H1 (cell line): ENCODE measurements at regions of chr3 and their contacts with region 1.

Region 1: DNA sequence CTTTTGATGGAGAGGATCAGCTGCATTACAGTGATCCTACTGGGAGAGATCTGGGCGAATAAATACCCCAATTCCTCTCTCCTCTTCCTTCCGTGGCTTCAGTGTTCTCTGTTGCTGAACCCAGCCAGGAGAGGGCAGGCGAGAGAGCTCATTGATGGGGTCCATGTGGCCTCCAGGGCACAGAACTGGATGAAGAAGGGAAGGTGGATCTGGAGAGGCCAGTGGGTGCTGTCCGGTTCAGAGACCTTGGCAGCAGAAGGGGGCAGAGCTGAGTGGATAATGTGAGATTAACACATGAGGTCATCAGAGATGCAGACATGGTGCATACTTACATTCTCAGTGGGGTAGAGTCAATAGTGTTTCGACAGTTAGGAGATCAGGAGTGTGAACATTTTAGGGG is 193.6 kb downstream of the CLSTN2 start:
- DNase-seq: peak; percentile 25 to 78
- H3K4me3 ChIP-seq: no peak overlapping the region
- H3K27ac ChIP-seq: no peak overlapping the region
- H3K4me1 ChIP-seq: no peaks in the 10 kb centered on the region; a peak in 1 of 7 replicates
- H3K27me3 ChIP-seq: no peaks in the 10 kb centered on the region
- CTCF ChIP-seq: peak; percentile 74 to 86 (median 82)
- EP300 ChIP-seq: no peak
- POLR2A ChIP-seq: no peak
- RAD21 ChIP-seq: peak; percentile 72 to 86

Region 2: DNA sequence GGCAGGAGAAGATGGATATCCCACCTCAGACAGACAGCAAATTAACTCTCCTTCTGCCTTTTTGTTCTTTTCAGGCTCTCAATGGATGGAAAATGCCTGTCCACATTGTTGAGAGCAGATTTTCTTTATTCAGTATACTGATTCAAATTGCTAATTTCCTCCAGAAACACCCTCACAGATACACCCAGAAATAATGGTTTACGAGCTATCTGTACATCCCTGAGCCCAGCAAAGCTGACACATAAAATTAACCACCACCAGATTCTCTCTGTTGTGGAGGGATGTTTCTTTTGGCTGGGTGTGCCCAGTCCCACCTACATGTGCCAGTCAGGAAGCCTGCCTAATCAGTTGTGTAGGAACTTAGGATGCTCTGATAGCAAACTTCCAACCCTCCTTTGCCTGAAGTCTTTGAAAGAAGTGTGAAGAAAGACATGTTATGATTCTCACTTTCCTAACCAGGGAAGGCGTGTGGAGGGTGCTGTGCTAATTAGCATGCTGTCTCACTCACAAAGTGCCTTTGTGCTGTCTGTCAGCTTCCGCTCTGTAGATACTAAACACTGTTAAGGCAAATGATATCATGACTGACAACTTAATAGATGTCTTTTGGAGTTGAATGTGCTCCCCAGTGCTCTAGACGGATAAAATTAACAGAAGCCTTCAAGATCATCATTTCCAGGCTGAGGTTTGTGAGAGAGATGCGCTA is 14.9 kb after region 1 on chr3:
- CTCF ChIA-PET with region 1: interaction called, 29 read pairs
- POLR2A ChIA-PET with region 1: interaction called, 3 read pairs
- DNase-seq: no peak
- H3K4me3 ChIP-seq: no peak overlapping the region
- H3K27ac ChIP-seq: no peak overlapping the region
- H3K4me1 ChIP-seq: no peaks in the 10 kb centered on the region
- H3K27me3 ChIP-seq: no peaks in the 10 kb centered on the region
- CTCF ChIP-seq: no peak
- EP300 ChIP-seq: no peak
- POLR2A ChIP-seq: no peak
- RAD21 ChIP-seq: no peak

Region 3: GRCh38 chr3:140206196-140207048 is 77.8 kb after region 1 on chr3:
- CTCF ChIA-PET with region 1: interaction called, 20 read pairs
- POLR2A ChIA-PET with region 1: no interaction called
- DNase-seq: no peak
- H3K4me3 ChIP-seq: no peak overlapping the region
- H3K27ac ChIP-seq: no peak overlapping the region
- H3K4me1 ChIP-seq: peaks cover 11 to 30% (median 23%) of the 10 kb centered on the region in 4 experiments
- H3K27me3 ChIP-seq: peaks cover 0 to 2% (median 0%) of the 10 kb centered on the region in 4 experiments; a peak in 1 of 7 replicates
- CTCF ChIP-seq: peak; percentile 15 to 42 (median 24)
- EP300 ChIP-seq: no peak
- POLR2A ChIP-seq: no peak
- RAD21 ChIP-seq: peak; percentile 31 to 57; a peak in 3 of 4 replicates

Region 4: DNA sequence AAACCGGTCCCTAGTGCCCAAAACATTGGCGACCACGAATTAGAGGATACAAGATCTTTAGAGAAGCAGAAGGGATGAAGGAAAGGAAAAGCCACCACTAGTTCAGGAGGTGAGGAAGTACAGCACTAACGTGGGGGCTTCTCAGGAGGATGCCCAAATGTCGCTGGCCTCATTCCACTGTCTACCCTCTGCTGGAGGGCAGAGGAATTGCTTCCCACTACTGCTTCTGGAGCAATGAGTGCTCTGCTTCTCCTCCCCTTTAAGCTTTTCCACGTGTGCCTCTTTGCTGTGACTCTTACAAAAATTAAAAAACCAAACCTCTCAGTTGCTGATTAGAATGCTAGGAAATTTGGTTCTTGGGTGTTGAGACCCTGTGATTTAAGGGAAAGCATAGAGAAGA is 87.6 kb after region 1 on chr3:
- CTCF ChIA-PET with region 1: interaction called, 24 read pairs
- POLR2A ChIA-PET with region 1: no interaction called
- DNase-seq: no peak
- H3K4me3 ChIP-seq: no peak overlapping the region
- H3K27ac ChIP-seq: no peak overlapping the region
- H3K4me1 ChIP-seq: peaks cover 0 to 3% (median 0%) of the 10 kb centered on the region in 4 experiments; a peak in 1 of 7 replicates
- H3K27me3 ChIP-seq: no peaks in the 10 kb centered on the region
- CTCF ChIP-seq: peak in 2 of 3 experiments; percentile 34 to 47; a peak in 2 of 4 replicates
- EP300 ChIP-seq: no peak
- POLR2A ChIP-seq: no peak
- RAD21 ChIP-seq: 0 out of 4 replicates have a peak, but pooled peaks of 1 of the 2 experiments have one; percentile 3

Region 5: DNA sequence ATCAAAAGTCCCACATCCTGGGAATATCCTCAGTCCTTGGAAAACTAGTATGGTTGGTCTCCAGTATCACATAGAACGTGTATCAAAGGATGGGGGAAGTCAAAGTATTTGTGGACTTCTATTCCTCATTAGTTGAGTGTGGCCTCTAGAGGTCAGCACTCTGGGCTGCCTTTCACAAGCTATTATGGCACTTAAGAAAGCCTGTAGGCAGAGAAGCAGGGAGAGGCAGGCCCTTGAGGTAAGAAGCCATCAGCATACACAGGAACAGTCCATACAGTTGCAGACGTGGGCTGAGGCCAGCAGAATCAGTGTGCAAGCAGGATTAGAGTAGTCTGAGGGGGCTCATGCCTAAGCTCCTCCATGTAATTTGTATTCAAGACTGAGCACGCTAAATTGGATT is 148.1 kb after region 1 on chr3:
- CTCF ChIA-PET with region 1: interaction called, 15 read pairs
- POLR2A ChIA-PET with region 1: no interaction called
- DNase-seq: peak in 1 of 2 experiments; percentile 17
- H3K4me3 ChIP-seq: no peak overlapping the region
- H3K27ac ChIP-seq: no peak overlapping the region
- H3K4me1 ChIP-seq: no peaks in the 10 kb centered on the region; a peak in 1 of 7 replicates
- H3K27me3 ChIP-seq: no peaks in the 10 kb centered on the region
- CTCF ChIP-seq: peak in 2 of 3 experiments; percentile 58 to 64; a peak in 3 of 4 replicates
- EP300 ChIP-seq: no peak
- POLR2A ChIP-seq: no peak
- RAD21 ChIP-seq: peak; percentile 53 to 72

Region 6: GRCh38 chr3:140499114-140499757 is 370.6 kb after region 1 on chr3:
- CTCF ChIA-PET with region 1: interaction called, 11 read pairs
- POLR2A ChIA-PET with region 1: no interaction called
- DNase-seq: no peak
- H3K4me3 ChIP-seq: no peak overlapping the region
- H3K27ac ChIP-seq: no peak overlapping the region
- H3K4me1 ChIP-seq: peaks cover 0 to 4% (median 2%) of the 10 kb centered on the region in 4 experiments; a peak in 2 of 7 replicates
- H3K27me3 ChIP-seq: no peaks in the 10 kb centered on the region
- CTCF ChIP-seq: peak in 2 of 3 experiments; percentile 48 to 52; a peak in 2 of 4 replicates
- EP300 ChIP-seq: no peak
- POLR2A ChIP-seq: no peak
- RAD21 ChIP-seq: peak; percentile 81 to 83

Region 7: DNA sequence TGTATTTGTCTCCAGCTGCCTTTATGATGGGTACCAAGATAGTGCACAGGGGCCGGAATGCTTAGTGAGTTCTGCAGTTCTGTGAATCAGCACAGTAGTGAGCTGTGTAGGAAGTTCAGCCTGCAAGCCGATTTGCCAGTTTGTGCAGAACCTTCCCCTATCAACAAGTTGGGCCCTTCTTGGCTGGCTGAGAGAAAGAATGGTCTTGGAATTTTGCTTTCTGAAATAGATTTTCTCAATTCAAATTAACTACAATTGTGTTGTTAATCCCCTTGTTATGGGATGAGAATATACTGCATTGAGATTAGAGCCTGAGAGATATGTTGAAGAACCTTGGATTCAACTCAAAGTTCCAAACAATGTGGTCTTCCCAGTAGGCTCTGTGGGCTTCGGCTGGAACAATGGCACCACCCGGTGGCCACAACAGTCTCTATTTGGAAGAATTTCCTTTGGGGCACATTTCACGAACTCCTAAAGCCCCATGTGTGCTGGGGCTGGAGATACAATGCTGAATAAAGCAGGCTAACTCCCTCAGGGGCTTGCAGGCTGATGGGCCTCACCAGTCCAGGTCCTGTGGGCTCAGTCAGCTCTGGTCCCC is 608.3 kb after region 1 on chr3:
- CTCF ChIA-PET with region 1: interaction called, 11 read pairs
- POLR2A ChIA-PET with region 1: no interaction called
- DNase-seq: peak; percentile 60 to 71
- H3K4me3 ChIP-seq: no peak overlapping the region
- H3K27ac ChIP-seq: no peak overlapping the region
- H3K4me1 ChIP-seq: no peaks in the 10 kb centered on the region; a peak in 1 of 7 replicates
- H3K27me3 ChIP-seq: no peaks in the 10 kb centered on the region
- CTCF ChIP-seq: peak; percentile 45 to 82 (median 68)
- EP300 ChIP-seq: no peak
- POLR2A ChIP-seq: no peak
- RAD21 ChIP-seq: peak; percentile 96 to 99